Activated CD8-positive, alpha-beta memory T cell treated with anti-CD3 and anti-CD28 coated beads, Interleukin-2, amount 10 ng/mL, durations not matched to agents 7 days and 5 days (primary cell): ENCODE measurements at regions of chr1 and their contacts with region 1.

Region 1: DNA sequence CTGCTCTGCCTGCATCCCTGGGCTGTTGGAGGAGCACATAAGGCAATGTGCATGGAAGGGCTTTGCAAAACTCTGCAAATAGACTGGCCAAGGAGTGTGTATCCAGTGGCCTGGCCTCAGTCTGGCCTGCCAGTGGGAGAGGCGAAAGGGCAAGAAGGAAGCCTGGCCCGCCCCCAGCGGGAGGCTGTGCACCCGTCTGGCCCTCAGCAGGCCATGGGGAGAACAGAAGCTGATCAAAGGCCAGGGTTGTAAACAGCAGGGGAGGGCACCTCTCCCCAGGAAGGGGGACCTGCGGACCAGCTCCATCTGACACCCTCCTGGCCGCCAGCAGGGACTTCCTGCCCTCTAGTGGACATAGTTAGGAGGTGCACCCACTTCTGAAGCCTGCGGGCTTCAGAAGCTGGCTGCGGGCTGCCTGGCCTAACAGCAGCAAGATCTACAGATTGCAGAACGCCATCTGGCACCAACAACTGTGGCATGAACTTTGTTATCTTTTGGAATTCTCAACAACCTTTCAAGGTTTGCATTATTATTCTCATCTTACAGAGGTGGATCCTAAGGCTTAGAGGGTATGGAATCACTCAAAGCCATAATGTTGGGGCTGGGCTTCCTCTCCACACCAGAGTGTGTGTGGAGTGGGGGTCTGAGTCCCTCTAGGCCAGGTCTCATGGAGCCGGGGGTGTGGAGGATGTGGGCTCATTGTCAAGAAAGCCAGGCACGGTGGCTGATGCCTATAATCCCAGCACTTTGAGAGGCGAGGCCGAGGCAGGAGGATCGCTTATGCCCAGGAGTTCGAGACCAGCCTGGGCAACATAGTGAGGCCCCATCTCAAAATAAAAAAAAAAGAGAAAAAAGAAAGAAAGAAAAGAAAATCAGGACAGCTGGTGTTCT is 18.9 kb upstream of the CDK18 start:
- DNase-seq: peak; percentile 79
- ATAC-seq: peak; percentile 59
- H3K4me3 Mint-ChIP-seq: no peak overlapping the region
- H3K27ac Mint-ChIP-seq: no peak overlapping the region
- H3K4me1 Mint-ChIP-seq: peaks cover 36% of the 10 kb centered on the region
- H3K27me3 Mint-ChIP-seq: peaks cover 24% of the 10 kb centered on the region

Region 2: DNA sequence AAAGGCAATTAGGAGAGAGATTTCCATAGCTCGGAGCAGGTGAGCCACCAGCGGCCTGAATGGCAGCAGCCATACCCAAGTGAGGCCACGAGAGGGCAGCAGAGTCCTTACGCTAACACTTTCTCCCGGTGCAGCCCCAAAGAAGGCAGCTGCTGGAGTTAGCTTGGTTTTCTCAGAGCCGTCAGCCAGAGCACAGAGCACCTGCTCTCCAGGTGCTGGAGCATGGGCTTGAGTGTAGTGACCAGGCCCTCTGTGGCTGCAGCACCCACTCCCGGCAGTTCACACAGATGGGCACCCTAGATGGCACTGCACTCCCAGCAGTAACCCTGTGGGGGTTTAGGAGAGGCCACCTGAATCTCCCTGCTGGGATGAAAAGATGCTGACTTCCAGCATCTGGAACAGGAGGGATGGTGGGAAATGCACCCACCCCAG is 212.0 kb before region 1 on chr1:
- CTCF ChIA-PET with region 1: interaction called, 35 read pairs
- DNase-seq: peak; percentile 88
- ATAC-seq: peak; percentile 88
- H3K4me3 Mint-ChIP-seq: no peak overlapping the region
- H3K27ac Mint-ChIP-seq: peak overlapping the region; percentile 40
- H3K4me1 Mint-ChIP-seq: peaks cover 10% of the 10 kb centered on the region
- H3K27me3 Mint-ChIP-seq: peaks cover 8% of the 10 kb centered on the region

Region 3: DNA sequence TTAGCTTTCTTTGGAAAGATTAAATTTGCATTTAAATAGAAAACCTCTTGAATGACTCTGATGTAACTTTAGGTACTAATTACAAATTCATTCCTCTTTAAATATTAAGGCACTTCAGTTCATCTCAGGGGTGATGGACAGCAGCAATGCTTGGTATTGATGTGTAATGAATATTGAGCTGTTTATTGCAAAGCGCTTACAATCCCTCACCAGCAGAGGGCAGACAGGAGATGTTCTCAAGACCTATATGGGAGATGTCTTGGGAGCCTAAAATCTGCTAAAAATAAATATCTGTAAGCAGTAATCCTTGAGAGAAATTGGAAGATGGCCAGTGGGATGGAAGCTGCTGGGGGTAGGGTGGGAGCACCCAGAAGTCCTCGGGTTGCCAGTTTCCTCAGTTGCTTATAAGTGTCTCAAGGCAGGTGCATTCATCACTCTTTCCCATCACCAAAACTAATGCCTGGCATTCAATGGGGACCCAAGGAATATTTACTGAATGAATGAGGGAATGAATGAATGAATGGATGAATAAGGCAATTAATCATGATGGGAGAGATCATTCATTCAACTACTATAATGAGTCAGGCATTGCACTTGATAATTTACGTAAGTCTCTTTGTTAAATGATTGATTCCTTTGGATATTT is 131.2 kb before region 1 on chr1:
- CTCF ChIA-PET with region 1: interaction called, 129 read pairs
- DNase-seq: peak; percentile 74
- ATAC-seq: peak; percentile 72
- H3K4me3 Mint-ChIP-seq: no peak overlapping the region
- H3K27ac Mint-ChIP-seq: no peak overlapping the region
- H3K4me1 Mint-ChIP-seq: no peaks in the 10 kb centered on the region
- H3K27me3 Mint-ChIP-seq: peaks cover 23% of the 10 kb centered on the region

Region 4: DNA sequence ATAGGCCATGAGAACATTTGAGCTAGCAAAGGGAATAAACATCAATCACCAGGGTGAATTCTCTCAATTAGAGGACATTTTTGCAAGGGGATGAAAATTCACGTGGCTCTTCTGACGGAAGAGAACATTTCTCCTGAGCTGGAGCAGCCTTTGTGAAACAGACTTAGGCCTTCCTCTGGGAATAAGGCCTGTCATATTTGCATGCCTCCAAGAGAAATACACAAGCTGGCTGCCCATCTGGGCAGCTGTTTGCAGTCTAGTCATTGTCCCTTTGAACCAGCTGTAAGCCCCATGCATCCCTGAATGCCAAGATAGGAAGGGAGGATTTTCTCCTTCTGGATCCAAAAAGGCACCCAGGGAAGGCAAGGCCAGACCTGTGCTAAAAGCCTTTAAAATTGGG is 69.3 kb before region 1 on chr1:
- CTCF ChIA-PET with region 1: interaction called, 16 read pairs
- DNase-seq: no peak
- ATAC-seq: no peak
- H3K4me3 Mint-ChIP-seq: no peak overlapping the region
- H3K27ac Mint-ChIP-seq: no peak overlapping the region
- H3K4me1 Mint-ChIP-seq: no peaks in the 10 kb centered on the region
- H3K27me3 Mint-ChIP-seq: peaks cover 24% of the 10 kb centered on the region

Region 5: DNA sequence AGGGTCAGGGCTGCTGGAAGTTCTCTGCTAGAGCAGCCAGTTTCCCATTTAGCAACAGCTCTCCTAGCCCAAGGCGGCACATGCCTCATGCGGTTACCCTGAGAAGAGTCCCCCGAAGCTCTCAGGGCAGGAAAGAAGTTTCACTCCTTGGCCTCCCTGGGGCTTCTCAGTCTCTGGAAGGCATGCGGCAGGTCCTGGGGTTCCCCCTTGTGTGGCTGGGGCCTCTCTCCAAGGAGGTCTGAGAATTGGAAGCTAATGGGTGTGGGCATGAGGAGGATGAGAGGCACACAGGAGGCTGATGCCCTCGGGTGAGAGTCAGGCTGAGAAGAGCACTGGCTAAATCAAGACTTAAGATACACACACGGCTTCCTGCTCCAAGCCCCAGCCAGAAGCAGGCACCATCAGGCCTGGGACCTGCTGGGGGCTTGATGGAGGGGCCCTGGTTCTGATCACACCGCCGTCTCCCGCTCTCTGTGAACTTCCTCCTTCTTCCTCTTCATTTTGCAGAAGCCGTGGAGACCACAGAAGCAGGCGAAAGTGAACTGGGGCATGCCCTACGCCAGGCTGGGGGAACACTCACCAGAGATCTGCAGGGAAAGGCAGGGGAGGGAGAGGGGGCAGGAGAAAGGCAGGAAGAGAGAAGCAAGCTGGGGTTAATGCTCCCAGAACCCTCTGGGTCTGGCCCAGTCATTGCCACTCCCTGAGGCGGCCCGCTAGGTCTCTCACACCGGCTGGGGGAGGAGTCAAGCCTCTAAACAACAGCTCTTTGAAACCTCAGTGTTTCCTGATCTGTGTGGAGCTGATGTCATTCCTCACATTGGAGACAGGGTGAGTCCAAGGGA is 44.9 kb before region 1 on chr1:
- CTCF ChIA-PET with region 1: interaction called, 58 read pairs
- DNase-seq: peak; percentile 90
- ATAC-seq: peak; percentile 97
- H3K4me3 Mint-ChIP-seq: peak overlapping the region; percentile 71
- H3K27ac Mint-ChIP-seq: peak overlapping the region; percentile 95
- H3K4me1 Mint-ChIP-seq: peaks cover 31% of the 10 kb centered on the region
- H3K27me3 Mint-ChIP-seq: peaks cover 7% of the 10 kb centered on the region

Region 6: DNA sequence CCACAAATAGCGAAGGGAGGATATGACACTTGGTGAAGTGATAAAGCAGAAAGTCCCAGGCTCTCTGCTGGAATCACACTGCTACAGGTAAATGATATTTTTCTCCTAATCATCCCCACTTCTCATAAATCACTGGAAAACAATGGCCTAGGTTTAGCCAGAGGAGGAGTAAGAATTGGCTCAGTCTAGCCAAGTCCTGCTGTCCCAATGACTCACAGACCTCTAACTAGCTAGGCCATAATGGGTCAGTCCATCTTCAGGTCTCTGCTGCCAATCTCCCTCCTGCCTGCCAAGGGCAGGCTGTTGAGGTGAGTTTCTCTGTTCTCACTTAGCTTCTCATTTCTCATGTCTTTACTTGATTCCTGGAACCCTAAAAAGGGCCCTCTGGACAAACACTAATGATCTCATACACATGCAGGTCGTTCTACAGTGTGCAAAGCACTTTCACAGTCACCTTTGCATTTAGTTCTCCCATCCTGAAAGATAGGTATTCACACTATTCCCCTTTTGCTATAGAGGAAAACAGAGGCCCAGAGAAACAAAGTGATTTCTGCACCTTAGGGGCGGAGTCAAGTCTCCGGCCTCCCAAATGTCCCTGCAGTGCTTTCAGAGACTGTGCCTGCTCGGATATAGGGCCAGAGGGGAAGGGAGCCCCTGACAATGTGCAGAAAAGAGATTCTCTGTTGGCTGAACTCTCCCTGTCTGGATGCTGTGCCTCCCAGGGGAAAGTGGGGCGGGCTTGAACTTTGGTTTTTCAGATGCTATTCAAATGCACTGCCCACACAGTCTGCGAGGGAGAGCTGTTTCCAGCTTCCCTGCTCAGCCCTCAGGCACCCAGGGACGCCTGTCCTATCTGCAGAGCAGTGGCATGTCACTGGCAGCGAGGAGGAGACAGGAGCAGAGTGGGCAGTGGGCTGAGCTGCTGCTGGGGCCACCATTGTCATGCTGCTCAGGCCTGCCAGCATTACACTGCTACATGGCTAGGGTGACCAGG is 15.0 kb after region 1 on chr1:
- CTCF ChIA-PET with region 1: interaction called, 48 read pairs
- DNase-seq: no peak
- ATAC-seq: no peak
- H3K4me3 Mint-ChIP-seq: no peak overlapping the region
- H3K27ac Mint-ChIP-seq: no peak overlapping the region
- H3K4me1 Mint-ChIP-seq: peaks cover 12% of the 10 kb centered on the region
- H3K27me3 Mint-ChIP-seq: peaks cover 19% of the 10 kb centered on the region

Region 7: DNA sequence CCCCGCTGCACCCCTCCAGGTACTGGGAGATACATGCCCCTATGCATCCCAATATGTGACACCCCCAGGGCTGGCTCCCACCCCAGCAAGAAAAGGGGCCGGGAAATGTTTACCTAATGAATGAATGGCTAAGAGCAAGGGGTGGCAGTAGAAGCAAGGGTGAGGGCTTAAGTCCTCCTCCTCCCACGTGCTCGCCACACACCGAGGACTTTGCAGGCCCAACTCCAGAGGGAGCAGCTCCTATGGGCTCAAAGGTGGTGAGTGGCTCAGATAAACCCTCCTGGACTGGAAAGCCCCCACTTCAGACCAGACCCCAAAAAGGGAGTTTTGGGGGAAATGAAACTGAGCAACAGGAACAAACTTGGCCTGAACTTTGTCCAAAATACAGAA is 183.4 kb after region 1 on chr1:
- CTCF ChIA-PET with region 1: no interaction called
- DNase-seq: no peak
- ATAC-seq: no peak
- H3K4me3 Mint-ChIP-seq: no peak overlapping the region
- H3K27ac Mint-ChIP-seq: no peak overlapping the region
- H3K4me1 Mint-ChIP-seq: peaks cover 10% of the 10 kb centered on the region
- H3K27me3 Mint-ChIP-seq: peaks cover 48% of the 10 kb centered on the region